Activated T-helper 1 cell treated with anti-CD3 and anti-CD28 coated beads, Interleukin-12 subunit alpha, Interleukin-12 subunit beta, Interleukin-2, Interleukin-4 antibody, amounts not matched to agents 30 ng/mL and 10 ng/mL and 1 ng/mL, durations not matched to agents 14 hours and 24 hours and 36 hours (primary cell): ENCODE measurements at regions of chr17 and their contacts with region 1.

Region 1: DNA sequence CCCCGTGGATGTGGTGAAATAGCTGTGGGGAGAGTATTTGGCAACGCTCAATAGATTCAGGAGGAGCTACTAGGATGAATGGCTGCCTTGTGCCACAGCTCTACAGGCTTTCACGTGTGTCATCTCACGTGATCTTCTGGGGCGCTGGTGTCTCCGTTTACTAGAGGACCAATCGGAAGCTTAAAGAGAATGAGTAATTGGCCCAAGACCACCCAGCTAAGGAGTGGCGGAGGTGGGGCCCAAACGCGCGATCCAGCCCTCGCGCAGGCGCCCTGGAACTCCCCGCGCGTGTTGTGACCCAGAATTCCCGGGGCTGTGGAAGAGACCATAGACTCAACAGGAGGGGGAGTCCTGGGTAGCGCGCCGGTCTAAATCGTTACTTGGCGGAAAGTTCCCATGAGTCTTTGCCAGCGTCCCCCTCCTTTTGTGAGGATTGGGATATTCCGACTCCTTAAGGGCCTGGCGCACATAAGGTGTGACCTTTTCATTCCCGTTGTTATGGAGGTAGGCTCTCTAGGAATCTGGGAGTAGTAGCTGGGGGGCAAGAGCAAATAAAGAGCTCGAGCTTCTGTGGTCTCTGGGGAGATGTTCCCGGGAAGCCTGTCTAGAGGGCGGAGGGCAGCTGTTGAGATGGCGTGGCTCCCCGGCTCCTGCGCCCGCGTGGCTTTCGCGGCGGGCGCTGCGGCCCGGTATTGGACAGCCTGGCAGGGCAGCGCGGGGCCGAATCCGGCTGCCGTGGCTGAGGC is 23.4 kb downstream of the TRPV2 start:
- DNase-seq: peak; percentile 92
- H3K4me3 Mint-ChIP-seq: peak overlapping the region; percentile 99
- H3K27ac Mint-ChIP-seq: peak overlapping the region; percentile 98
- H3K4me1 Mint-ChIP-seq: peaks cover 61% of the 10 kb centered on the region
- H3K27me3 Mint-ChIP-seq: no peaks in the 10 kb centered on the region

Region 2: DNA sequence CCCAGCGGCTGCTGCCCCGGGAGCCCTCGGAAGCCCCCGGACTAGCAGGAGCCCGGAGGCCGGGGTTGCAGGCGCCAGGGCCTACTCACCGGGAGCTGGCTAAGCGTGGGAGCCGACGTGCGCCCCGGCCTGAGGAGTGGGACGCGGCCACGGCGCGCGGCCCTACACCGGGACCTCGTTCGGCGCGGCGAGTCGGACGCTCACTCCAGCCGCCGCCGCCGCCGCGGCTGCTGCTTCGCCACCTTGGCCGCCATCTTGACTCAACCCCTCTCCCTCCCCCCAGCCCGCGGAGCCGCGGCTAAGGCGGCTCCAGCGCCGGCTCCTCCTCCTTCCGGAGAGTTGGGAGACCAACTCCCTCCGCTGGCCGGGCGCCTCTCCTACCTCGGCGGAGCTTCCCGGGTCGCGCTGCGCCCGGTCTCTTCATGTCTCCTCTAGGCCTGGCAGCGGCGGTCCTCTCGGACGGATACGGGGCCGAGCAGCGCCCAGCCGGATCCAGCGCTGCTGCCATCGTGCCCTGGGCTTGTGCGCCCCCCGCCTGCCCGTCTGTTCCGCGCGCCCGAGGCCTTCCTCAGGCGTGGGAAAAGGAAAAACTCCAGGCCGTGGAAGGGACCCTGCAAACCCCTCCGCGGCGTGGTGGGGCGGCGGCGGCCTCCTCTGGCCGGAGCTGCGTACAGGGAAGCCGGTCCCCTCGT is 223.3 kb before region 1 on chr17 and contains the start of gene NCOR1:
- intact Hi-C with region 1: loop called (anchors 10 kb)
- DNase-seq: peak; percentile 87
- H3K4me3 Mint-ChIP-seq: peak within 1 kb of the TSS; percentile 96
- H3K27ac Mint-ChIP-seq: peak within 1 kb of the TSS; percentile 77
- H3K4me1 Mint-ChIP-seq: peaks cover 27% of the 10 kb centered on the region
- H3K27me3 Mint-ChIP-seq: no peaks in the 10 kb centered on the region
- total RNA-seq, gene NCOR1: 123 and 131 TPM in 2 replicates

Region 3: DNA sequence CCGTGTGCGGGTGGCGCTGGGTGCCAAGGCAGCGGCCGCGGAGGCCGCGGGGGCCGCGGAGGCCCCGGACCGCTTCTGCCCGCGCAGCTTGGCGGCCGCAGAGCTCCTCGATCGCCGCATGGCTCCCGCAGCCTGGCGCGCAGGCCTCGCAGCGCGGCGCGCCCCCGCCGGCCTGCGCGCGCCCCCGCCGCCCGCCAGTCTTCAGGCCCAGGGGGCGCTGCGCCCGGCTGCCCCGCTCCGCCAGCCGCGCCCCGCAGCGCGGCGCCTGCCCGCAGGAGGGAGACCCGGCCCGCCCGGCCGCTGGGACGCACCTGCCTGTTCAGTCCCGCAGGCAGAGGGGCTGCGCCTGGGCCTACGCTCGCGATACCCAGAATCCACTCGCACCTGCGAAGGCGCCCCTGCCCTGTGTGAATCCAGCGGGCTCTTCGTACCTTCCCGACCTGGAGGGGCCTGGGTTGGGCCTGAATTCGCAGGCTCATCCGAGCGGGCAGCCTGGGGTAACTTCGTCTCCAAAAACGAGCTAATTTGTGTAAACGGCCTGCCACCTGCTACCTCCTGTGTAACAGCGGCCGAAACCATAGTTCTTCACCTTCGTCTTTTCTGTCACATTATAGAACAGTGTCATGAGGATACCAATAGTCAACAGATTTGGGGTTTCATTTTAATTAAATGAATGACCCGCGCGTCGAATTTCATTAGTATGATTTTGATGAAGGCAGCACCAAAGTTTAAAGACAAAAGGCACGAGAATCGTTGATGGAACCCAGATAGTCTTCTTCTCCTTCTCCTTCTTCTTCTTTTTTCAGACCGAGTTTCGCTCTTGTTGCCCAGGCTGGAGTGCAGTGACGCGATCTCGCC is 85.2 kb before region 1 on chr17 and contains the start of gene CENPV:
- intact Hi-C with region 1: loop called (anchors 2 kb)
- DNase-seq: peak; percentile 49
- H3K4me3 Mint-ChIP-seq: peak within 1 kb of the TSS; percentile 95
- H3K27ac Mint-ChIP-seq: peak within 1 kb of the TSS; percentile 77
- H3K4me1 Mint-ChIP-seq: peaks cover 16% of the 10 kb centered on the region
- H3K27me3 Mint-ChIP-seq: peaks cover 22% of the 10 kb centered on the region
- total RNA-seq, gene CENPV: 47.1 and 54.7 TPM in 2 replicates

Region 4: DNA sequence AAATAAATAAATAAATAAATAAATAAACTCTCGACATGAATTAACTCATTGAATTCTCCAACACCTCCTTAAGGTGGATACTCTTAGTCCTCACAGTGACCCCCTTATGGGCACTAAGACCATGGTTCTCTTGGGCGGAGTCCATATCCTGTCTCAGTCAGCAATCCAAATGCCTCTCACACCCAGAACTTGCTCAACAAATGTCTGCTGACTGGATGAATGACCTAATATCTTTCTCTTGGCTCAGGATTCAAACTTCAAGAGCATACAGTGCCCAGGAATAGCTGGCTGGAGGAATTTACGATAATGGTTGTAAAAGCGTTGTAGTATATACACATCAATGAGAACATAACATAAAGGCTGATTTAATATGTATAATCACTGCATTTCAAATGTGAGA is 64.6 kb before region 1 on chr17:
- intact Hi-C with region 1: no loop called
- DNase-seq: no peak
- H3K4me3 Mint-ChIP-seq: no peak overlapping the region
- H3K27ac Mint-ChIP-seq: no peak overlapping the region
- H3K4me1 Mint-ChIP-seq: no peaks in the 10 kb centered on the region
- H3K27me3 Mint-ChIP-seq: peaks cover 7% of the 10 kb centered on the region

Region 5: DNA sequence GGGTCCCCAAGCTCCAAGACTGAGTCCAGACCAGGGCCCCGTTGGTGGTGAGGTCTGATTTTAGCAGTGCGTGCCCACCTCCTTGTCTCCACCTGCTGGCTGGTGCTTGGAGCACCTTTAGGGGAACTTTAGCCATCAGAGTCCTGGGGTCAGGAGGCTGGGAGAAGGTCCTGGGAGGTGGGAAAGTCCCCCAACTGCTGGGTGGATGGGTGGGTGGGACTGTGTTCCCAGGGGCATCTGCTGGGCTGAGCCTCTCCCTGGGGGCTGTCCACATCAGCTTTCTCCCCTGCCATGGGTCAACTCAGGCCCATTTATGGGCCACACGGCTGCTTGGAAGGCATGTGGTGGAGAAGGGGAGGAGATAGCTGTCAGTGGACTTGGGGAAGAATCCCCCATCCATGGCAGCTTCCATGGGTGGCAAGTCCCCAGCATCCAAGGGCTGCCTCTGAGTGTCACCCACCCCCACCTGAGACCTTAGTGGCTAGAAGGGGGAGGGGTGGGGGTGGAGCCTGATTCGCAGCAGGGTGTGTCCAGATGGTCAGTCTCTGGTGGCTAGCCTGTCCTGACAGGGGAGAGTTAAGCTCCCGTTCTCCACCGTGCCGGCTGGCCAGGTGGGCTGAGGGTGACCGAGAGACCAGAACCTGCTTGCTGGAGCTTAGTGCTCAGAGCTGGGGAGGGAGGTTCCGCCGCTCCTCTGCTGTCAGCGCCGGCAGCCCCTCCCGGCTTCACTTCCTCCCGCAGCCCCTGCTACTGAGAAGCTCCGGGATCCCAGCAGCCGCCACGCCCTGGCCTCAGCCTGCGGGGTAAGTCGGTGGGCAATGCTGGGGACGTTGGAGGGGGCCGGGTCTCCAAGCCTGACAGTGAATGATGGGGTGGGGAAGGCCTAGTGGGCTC is 23.5 kb before region 1 on chr17 and contains the start of gene TRPV2:
- intact Hi-C with region 1: loop called (anchors 1 kb)
- DNase-seq: peak; percentile 37
- H3K4me3 Mint-ChIP-seq: peak within 1 kb of the TSS; percentile 96
- H3K27ac Mint-ChIP-seq: peak within 1 kb of the TSS; percentile 99
- H3K4me1 Mint-ChIP-seq: peaks cover 43% of the 10 kb centered on the region
- H3K27me3 Mint-ChIP-seq: no peaks in the 10 kb centered on the region
- total RNA-seq, gene TRPV2: 38.2 and 42.2 TPM in 2 replicates

Region 6: GRCh38 chr17:16589097-16589969 is 150.6 kb after region 1 on chr17:
- intact Hi-C with region 1: loop called (anchors 1 kb)
- DNase-seq: peak; percentile 89
- H3K4me3 Mint-ChIP-seq: peak overlapping the region; percentile 72
- H3K27ac Mint-ChIP-seq: no peak overlapping the region
- H3K4me1 Mint-ChIP-seq: peaks cover 18% of the 10 kb centered on the region
- H3K27me3 Mint-ChIP-seq: peaks cover 47% of the 10 kb centered on the region